Vagina (tissue), 2 donors: ENCODE measurements at regions of chr7 and their contacts with region 1.

Region 1: GRCh38 chr7:8627325-8627724 is 193.9 kb downstream of the NXPH1 start:
- DNase-seq: no peak
- H3K4me3 ChIP-seq: no peak overlapping the region
- H3K27ac ChIP-seq: no peak overlapping the region
- H3K4me1 ChIP-seq: no peaks in the 10 kb centered on the region
- H3K27me3 ChIP-seq: no peaks in the 10 kb centered on the region
- CTCF ChIP-seq: no peak
- POLR2A ChIP-seq: no peak

Region 2: GRCh38 chr7:7002416-7003062 is 1624.8 kb before region 1 on chr7:
- intact Hi-C with region 1: loop called (anchors 10 kb)
- DNase-seq: no peak
- H3K4me3 ChIP-seq: no peak overlapping the region
- H3K27ac ChIP-seq: no peak overlapping the region
- H3K4me1 ChIP-seq: no peaks in the 10 kb centered on the region
- H3K27me3 ChIP-seq: no peaks in the 10 kb centered on the region
- CTCF ChIP-seq: no peak
- POLR2A ChIP-seq: no peak

Region 3: GRCh38 chr7:7566651-7567611 is 1060.4 kb before region 1 on chr7 and contains the start of gene MIOS:
- intact Hi-C with region 1: no loop called
- DNase-seq: no peak
- H3K4me3 ChIP-seq: peak within 1 kb of the TSS; percentile 77 to 81
- H3K27ac ChIP-seq: peak within 1 kb of the TSS; percentile 94
- H3K4me1 ChIP-seq: peaks cover 51% of the 10 kb centered on the region
- H3K27me3 ChIP-seq: no peaks in the 10 kb centered on the region
- CTCF ChIP-seq: no peak
- POLR2A ChIP-seq: peak in 1 of 2 donors; percentile 58
- total RNA-seq, gene MIOS: 50.1 TPM

Region 4: GRCh38 chr7:8998762-8999161 is 371.4 kb after region 1 on chr7:
- intact Hi-C with region 1: no loop called
- DNase-seq: no peak
- H3K4me3 ChIP-seq: no peak overlapping the region
- H3K27ac ChIP-seq: no peak overlapping the region
- H3K4me1 ChIP-seq: no peaks in the 10 kb centered on the region
- H3K27me3 ChIP-seq: no peaks in the 10 kb centered on the region
- CTCF ChIP-seq: no peak
- POLR2A ChIP-seq: no peak